H1 (cell line): ENCODE measurements at regions of chr22 and their contacts with region 1.

Region 1: DNA sequence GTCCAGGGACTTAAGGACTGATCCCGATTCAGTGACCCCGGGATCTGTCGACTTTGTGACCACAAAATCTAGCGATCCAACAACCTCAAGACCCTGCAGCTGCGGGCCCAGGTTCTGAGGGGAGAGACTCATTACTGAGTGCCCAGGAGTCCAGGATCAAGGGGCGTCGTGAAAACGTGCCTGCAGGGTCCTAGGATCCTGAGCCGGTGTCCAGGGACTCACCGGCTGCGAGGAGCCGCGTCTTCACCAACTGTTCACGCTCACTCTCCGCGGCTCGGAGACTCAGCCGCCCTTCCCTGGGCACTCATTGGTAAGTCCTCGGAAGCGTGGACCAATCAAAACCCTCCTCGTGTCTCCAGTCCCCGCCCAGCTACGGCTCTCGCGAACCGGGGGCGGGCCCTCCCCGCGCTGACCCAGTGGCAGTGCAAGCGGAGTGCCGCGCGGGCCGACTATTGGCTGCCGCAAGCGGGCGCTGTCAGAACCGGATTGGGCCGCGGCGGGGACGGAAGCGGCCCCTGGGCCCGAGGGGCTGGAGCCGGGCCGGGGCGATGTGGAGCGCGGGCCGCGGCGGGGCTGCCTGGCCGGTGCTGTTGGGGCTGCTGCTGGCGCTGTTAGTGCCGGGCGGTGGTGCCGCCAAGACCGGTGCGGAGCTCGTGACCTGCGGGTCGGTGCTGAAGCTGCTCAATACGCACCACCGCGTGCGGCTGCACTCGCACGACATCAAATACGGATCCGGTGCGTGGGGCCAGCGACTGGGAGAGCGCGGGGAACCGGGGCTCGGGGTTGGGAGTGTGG is at the start of gene SDF2L1:
- DNase-seq: peak; percentile 92 to 96
- H3K4me3 ChIP-seq: peak within 1 kb of the TSS; percentile 65 to 77 (median 72)
- H3K27ac ChIP-seq: no peak within 1 kb of the TSS
- H3K4me1 ChIP-seq: peaks cover 0 to 5% (median 2%) of the 10 kb centered on the region in 4 experiments; a peak in 4 of 7 replicates
- H3K27me3 ChIP-seq: peaks cover 0 to 7% (median 1%) of the 10 kb centered on the region in 4 experiments; a peak in 3 of 7 replicates
- CTCF ChIP-seq: 0 out of 4 replicates have a peak, but pooled peaks of 1 of the 3 experiments have one; percentile 2
- EP300 ChIP-seq: peak in 1 of 2 experiments; percentile 18; a peak in 1 of 3 replicates
- POLR2A ChIP-seq: peak in 1 of 2 experiments; percentile 64; a peak in 2 of 3 replicates
- RAD21 ChIP-seq: no peak
- total RNA-seq, gene SDF2L1: 51.1 and 54.5 TPM in 2 replicates

Region 2: DNA sequence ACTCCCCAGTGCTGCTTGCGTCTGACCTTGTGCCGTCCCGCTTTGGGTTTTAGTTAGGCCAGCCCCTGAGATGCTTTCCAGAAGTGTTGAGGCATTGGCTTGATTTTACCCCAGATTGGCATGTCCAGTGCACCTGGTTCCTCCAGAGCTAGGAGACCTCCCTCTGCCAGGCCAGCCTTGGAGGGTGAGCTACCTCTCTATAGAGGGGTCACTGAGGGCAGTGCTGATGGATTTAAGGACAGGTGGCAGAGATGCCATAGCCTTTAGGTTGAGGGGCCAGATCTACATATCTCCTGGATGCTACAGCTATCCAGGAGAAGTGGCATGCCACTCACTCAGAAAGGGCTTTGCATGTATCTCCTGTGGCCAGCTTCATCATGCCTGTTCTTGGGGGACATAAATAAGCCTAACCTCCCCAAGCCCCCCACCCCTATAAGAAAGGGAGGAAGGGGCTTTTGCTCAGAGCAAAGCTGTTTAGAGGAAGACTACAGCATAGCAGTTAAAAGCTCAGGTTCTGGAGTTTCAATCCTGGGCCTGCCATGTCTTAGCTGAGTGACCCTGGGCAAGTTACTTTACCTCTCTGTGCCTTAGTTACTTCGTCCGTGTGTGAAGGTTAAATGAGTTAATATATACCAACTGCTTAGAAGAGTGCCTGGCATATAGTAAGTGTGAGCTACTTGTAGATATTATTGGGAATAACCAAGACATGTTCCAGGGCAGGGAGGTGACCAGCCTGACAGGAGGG is 68.1 kb before region 1 on chr22:
- CTCF ChIA-PET with region 1: interaction called, 27 read pairs
- POLR2A ChIA-PET with region 1: interaction called, 4 read pairs
- DNase-seq: no peak
- H3K4me3 ChIP-seq: no peak overlapping the region
- H3K27ac ChIP-seq: peak overlapping the region; percentile 36; the same call in 1 of the 2 replicates
- H3K4me1 ChIP-seq: peaks cover 0 to 8% (median 6%) of the 10 kb centered on the region in 4 experiments; a peak in 4 of 7 replicates
- H3K27me3 ChIP-seq: no peaks in the 10 kb centered on the region
- CTCF ChIP-seq: no peak
- EP300 ChIP-seq: no peak
- POLR2A ChIP-seq: no peak
- RAD21 ChIP-seq: no peak

Region 3: GRCh38 chr22:21599053-21599893 is 42.7 kb before region 1 on chr22:
- CTCF ChIA-PET with region 1: interaction called, 35 read pairs
- POLR2A ChIA-PET with region 1: interaction called, 4 read pairs
- DNase-seq: no peak
- H3K4me3 ChIP-seq: no peak overlapping the region
- H3K27ac ChIP-seq: no peak overlapping the region
- H3K4me1 ChIP-seq: no peaks in the 10 kb centered on the region
- H3K27me3 ChIP-seq: no peaks in the 10 kb centered on the region
- CTCF ChIP-seq: no peak
- EP300 ChIP-seq: no peak
- POLR2A ChIP-seq: no peak
- RAD21 ChIP-seq: no peak

Region 4: GRCh38 chr22:21629262-21630149 is 12.5 kb before region 1 on chr22 and contains the start of gene YDJC:
- CTCF ChIA-PET with region 1: interaction called, 499 read pairs
- POLR2A ChIA-PET with region 1: interaction called, 74 read pairs
- DNase-seq: peak; percentile 82 to 96
- H3K4me3 ChIP-seq: peak within 1 kb of the TSS; percentile 52 to 95 (median 86)
- H3K27ac ChIP-seq: peak within 1 kb of the TSS; percentile 77; the same call in 1 of the 2 replicates
- H3K4me1 ChIP-seq: peaks cover 0 to 3% (median 2%) of the 10 kb centered on the region in 4 experiments; a peak in 2 of 7 replicates
- H3K27me3 ChIP-seq: no peaks in the 10 kb centered on the region; a peak in 2 of 7 replicates
- CTCF ChIP-seq: peak; percentile 70 to 89 (median 73)
- EP300 ChIP-seq: no peak
- POLR2A ChIP-seq: peak in 1 of 2 experiments; percentile 82; a peak in 2 of 3 replicates
- RAD21 ChIP-seq: peak; percentile 5 to 37; a peak in 1 of 4 replicates
- total RNA-seq, gene YDJC: 36.5 and 36.7 TPM in 2 replicates

Region 5: GRCh38 chr22:21657361-21658032 is 15.5 kb after region 1 on chr22:
- CTCF ChIA-PET with region 1: interaction called, 499 read pairs
- POLR2A ChIA-PET with region 1: interaction called, 42 read pairs
- DNase-seq: peak in 1 of 2 experiments; percentile 92
- H3K4me3 ChIP-seq: peak overlapping the region; percentile 41 to 64 (median 52)
- H3K27ac ChIP-seq: peak overlapping the region; percentile 48; the same call in 1 of the 2 replicates
- H3K4me1 ChIP-seq: peaks cover 0 to 14% (median 6%) of the 10 kb centered on the region in 4 experiments; a peak in 6 of 7 replicates
- H3K27me3 ChIP-seq: no peaks in the 10 kb centered on the region; a peak in 1 of 7 replicates
- CTCF ChIP-seq: peak in 1 of 3 experiments; percentile 23; a peak in 1 of 4 replicates
- EP300 ChIP-seq: no peak
- POLR2A ChIP-seq: peak in 1 of 2 experiments; percentile 80; a peak in 2 of 3 replicates
- RAD21 ChIP-seq: no peak